Dorsolateral prefrontal cortex (tissue), 120 donors: ENCODE measurements at regions of chr20 and their contacts with region 1.

Region 1: DNA sequence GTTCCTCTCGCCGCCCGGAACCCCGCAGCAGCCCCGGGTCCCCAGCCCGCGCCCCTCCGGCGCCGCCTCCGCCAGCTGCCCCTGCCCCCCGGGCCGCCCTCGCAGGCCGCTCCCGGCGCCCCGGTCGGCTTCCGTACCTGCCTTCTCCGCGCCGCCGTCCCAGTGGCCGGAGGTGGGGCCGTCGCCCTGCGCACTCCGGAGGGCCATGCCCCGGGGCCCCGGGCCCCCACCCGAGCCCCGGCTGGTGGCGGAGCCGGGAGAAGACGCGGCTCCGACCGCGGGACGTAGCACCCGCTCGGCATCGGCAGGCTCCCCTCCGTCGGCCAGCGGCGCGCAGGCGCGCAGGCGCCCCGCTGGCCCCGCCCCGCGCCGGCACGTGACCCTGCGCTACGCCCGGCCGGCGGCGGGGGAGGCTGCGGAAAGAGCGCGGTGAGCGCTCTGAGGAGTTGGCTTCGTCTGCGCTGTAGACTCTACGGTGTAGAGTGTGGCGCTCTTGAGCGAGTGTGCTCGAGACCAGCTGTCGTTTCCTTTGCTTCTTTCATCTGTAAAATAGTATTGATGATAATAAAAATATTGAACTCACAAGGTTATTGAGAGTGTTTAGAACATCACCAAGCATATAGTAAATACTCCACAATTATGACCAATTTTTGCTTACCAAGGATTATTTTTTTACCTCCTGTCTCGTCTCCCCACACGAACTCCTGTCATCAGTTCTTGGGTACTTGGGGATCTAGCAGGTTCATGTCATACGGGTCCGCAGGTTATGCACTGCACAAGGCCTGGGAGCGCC is at the start of gene TBC1D20:
- DNase-seq: peak; percentile 62 to 88 (median 84)
- H3K4me3 ChIP-seq: peak within 1 kb of the TSS; percentile 59 to 97 (median 88)
- H3K27ac ChIP-seq: peak within 1 kb of the TSS; percentile 48 to 97 (median 87)
- H3K27me3 ChIP-seq: no peaks in the 10 kb centered on the region
- CTCF ChIP-seq: peak in 51 of 56 donors; percentile 18 to 70 (median 50)
- total RNA-seq, gene TBC1D20: 29.0 to 51.1 (median 39.1) TPM

Region 2: GRCh38 chr20:543369-544152 is 81.2 kb after region 1 on chr20 and contains the start of gene CSNK2A1:
- intact Hi-C with region 1: loop called (anchors 5 kb)
- DNase-seq: peak; percentile 90 to 96 (median 94)
- H3K4me3 ChIP-seq: peak within 1 kb of the TSS; percentile 72 to 100 (median 95)
- H3K27ac ChIP-seq: peak within 1 kb of the TSS; percentile 80 to 100 (median 97)
- H3K27me3 ChIP-seq: peaks cover 0 to 5% (median 0%) of the 10 kb centered on the region in 45 donors
- CTCF ChIP-seq: peak in 23 of 56 donors; percentile 7 to 59 (median 37)
- total RNA-seq, gene CSNK2A1: 89.8 to 145 (median 121) TPM